ENCODE measurements at regions of chr11 and their contacts with region 1.

Region 1: DNA sequence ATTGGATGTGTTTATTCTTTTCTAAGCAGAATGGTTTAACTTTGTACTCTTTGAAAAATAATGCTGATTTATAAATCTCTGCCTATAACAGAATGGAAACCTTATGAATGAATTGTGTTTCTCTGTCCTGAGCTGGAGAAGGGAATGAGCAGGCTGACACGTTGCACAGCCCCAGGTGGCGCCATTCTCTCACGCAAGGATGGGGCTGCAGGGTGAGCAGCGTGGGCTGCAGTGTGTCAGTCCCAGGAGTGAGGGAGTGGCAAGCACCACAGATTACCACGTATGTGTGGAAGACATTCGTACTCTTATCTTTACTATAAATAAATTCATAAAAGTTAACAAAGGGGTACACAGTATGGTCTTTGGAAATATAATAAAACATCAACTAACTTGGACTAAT is 33.4 kb downstream of the FDX1 start:
- DNase-seq: peak; percentile 53 to 90 (median 79)

Region 2: GRCh38 chr11:111230122-111230465 is 766.9 kb after region 1 on chr11:
- intact Hi-C with region 1: loop called (anchors 10 kb)
- DNase-seq: peak in 2 of 42 donors; percentile 2 to 10

Measured in head of caudate nucleus (tissue), 42 donors.